ENCODE measurements at regions of chr6 and their contacts with region 1.

Region 1: GRCh38 chr6:109925079-109925478 is 53.0 kb upstream of the GPR6 start:
- DNase-seq: no peak

Region 2: GRCh38 chr6:109772961-109773431 is 152.1 kb before region 1 on chr6:
- intact Hi-C with region 1: no loop called
- DNase-seq: peak; percentile 80

Region 3: GRCh38 chr6:109816452-109817374 is 108.4 kb before region 1 on chr6:
- intact Hi-C with region 1: loop called (anchors 10 kb)
- DNase-seq: no peak